Activated B cell treated with CpG ODN at 0.5 μM for 24 hours (primary cell): ENCODE measurements at regions of chr11 and their contacts with region 1.

Region 1: DNA sequence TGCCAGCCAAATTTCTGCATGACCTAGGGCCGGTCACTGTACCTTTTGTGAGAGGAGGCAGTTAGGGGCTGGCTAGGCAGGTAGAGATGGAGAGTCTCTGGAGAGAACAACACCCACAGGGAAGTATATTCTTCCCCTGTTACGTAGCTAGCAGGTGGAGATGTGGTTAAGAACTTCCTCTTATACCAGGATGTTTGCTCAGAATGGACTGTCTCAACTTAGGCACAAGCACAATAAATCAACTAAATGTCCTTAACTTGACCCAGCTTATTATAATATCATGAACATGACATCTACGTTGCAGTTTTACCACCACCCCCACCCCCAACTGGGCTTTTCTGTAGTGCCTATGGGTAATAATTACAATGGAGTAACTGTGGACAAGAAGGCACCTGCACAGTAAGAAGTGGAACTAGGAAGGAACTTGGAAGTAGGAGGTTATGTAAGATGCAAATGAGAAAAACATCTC is 60.7 kb upstream of the MPEG1 start:
- DNase-seq: no peak
- ATAC-seq: peak; percentile 83
- H3K4me3 Mint-ChIP-seq: peak overlapping the region; percentile 70
- H3K27ac Mint-ChIP-seq: peak overlapping the region; percentile 92
- H3K4me1 Mint-ChIP-seq: peaks cover 91% of the 10 kb centered on the region
- H3K27me3 Mint-ChIP-seq: no peaks in the 10 kb centered on the region
- CTCF ChIP-seq: no peak

Region 2: GRCh38 chr11:59197991-59198390 is 75.4 kb before region 1 on chr11:
- CTCF ChIA-PET with region 1: no interaction called
- POLR2A ChIA-PET with region 1: interaction called, 4 read pairs
- intact Hi-C with region 1: loop called (anchors 1 kb)
- DNase-seq: no peak
- ATAC-seq: peak; percentile 26
- H3K4me3 Mint-ChIP-seq: no peak overlapping the region
- H3K27ac Mint-ChIP-seq: peak overlapping the region; percentile 88
- H3K4me1 Mint-ChIP-seq: peaks cover 82% of the 10 kb centered on the region
- H3K27me3 Mint-ChIP-seq: no peaks in the 10 kb centered on the region
- CTCF ChIP-seq: no peak

Region 3: DNA sequence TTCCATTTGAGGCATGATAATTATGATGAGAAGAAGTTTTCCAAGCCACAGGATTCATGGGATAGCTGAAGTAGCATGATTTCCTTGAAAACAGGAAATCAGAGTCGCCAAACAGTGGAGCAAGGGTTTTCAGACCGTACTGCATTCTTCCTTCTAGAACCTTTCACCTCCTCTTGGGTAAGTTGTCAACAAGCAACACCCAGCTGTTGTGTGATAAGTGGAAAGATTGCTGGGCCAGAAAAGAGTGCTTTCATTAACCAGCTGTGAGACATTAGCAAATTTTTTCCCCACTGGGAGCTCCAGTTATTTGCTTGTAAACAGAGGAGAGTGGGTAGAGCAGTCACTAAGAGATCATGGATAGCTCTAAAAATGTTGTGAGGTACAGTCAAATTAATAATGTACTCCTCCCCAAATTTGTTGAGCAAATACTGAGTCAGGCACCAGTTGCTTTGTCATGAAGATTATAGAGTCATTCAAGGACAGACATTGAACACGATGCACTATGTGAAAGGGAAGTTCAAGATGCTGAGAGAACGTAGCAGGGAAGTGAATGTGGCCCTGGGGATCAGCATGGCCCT is 49.0 kb before region 1 on chr11:
- CTCF ChIA-PET with region 1: interaction called, 4 read pairs
- POLR2A ChIA-PET with region 1: interaction called, 35 read pairs
- intact Hi-C with region 1: no loop called
- DNase-seq: no peak
- ATAC-seq: peak; percentile 65
- H3K4me3 Mint-ChIP-seq: peak overlapping the region; percentile 16
- H3K27ac Mint-ChIP-seq: peak overlapping the region; percentile 81
- H3K4me1 Mint-ChIP-seq: peaks cover 59% of the 10 kb centered on the region
- H3K27me3 Mint-ChIP-seq: no peaks in the 10 kb centered on the region
- CTCF ChIP-seq: no peak

Region 4: DNA sequence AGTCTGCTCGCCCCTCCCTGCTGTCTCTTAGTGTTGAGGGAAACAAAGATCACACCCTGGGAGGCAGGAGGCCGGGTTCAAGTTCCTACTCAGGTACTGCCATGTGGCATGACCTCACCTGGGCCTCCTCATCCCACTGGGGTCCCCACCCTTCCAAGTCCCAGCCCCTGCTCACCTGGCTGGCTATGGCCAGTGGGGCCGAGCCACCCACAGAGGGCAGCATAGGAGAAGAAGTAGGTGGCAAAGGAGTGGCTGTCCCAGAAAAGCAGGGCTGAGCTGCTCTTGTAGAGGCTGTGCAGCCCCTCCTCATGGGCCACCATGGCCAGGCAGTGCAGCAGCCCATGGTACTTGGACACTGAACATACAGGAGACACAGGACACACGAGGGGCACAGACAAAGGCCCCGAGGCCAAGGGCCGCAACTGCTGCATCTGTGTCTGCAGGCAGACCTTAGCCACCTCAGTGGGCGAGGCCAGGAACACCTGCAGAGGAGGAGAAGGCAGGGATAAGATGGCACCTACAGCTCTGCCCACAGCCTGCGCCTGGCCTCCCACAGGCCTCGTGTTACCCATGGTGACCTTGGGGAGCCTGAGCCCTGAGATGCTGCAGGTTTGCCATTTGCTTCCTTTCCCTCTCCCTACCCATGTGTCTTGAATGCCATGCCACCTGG is 10.0 kb before region 1 on chr11:
- CTCF ChIA-PET with region 1: interaction called, 14 read pairs
- POLR2A ChIA-PET with region 1: interaction called, 21 read pairs
- intact Hi-C with region 1: loop called (anchors 1 kb)
- DNase-seq: peak; percentile 52
- ATAC-seq: peak; percentile 65
- H3K4me3 Mint-ChIP-seq: no peak overlapping the region
- H3K27ac Mint-ChIP-seq: no peak overlapping the region
- H3K4me1 Mint-ChIP-seq: peaks cover 71% of the 10 kb centered on the region
- H3K27me3 Mint-ChIP-seq: no peaks in the 10 kb centered on the region
- CTCF ChIP-seq: no peak